Activated T-helper 2 cell treated with anti-CD3 and anti-CD28 coated beads, Interferon-gamma antibody, Interleukin-2, Interleukin-4, amounts not matched to agents 10 μg/mL and 5 μg/mL and 100 μg/mL, durations not matched to agents 14 hours and 24 hours and 36 hours (primary cell): ENCODE measurements at regions of chr6 and their contacts with region 1.

Region 1: DNA sequence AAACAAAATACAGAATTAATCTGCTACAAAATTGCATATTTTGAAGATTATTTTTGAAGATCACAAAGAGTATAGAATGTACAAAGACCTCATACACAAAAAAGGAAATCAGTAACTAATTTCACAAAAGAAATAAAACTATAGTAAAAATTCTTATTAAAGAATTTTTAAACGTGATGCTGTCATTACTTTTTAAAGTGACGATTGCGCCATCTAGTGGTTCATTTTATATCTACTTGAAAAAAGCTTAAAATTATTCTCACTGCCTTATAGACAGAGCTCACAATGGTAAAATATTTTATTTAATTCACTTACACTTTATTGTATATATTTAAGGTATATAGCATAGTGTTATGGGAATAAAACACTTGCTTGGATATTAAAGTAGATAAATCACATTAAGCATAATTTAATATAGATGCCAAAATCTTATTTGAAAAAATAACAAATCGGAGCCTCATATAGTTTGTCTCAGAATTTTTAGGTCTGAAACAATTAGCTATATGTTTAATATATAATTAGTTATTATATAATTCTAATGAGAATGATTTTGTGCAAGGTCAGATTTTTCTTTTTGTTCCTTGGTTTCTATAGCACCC is 128.8 kb downstream of the PHF3 start:
- DNase-seq: no peak
- H3K4me3 Mint-ChIP-seq: no peak overlapping the region
- H3K27ac Mint-ChIP-seq: no peak overlapping the region
- H3K4me1 Mint-ChIP-seq: no peaks in the 10 kb centered on the region
- H3K27me3 Mint-ChIP-seq: peaks cover 6% of the 10 kb centered on the region

Region 2: GRCh38 chr6:63352587-63353285 is 411.7 kb before region 1 on chr6:
- intact Hi-C with region 1: loop called (anchors 1 kb)
- DNase-seq: no peak
- H3K4me3 Mint-ChIP-seq: peak overlapping the region; percentile 47
- H3K27ac Mint-ChIP-seq: no peak overlapping the region
- H3K4me1 Mint-ChIP-seq: peaks cover 13% of the 10 kb centered on the region
- H3K27me3 Mint-ChIP-seq: peaks cover 5% of the 10 kb centered on the region

Region 3: DNA sequence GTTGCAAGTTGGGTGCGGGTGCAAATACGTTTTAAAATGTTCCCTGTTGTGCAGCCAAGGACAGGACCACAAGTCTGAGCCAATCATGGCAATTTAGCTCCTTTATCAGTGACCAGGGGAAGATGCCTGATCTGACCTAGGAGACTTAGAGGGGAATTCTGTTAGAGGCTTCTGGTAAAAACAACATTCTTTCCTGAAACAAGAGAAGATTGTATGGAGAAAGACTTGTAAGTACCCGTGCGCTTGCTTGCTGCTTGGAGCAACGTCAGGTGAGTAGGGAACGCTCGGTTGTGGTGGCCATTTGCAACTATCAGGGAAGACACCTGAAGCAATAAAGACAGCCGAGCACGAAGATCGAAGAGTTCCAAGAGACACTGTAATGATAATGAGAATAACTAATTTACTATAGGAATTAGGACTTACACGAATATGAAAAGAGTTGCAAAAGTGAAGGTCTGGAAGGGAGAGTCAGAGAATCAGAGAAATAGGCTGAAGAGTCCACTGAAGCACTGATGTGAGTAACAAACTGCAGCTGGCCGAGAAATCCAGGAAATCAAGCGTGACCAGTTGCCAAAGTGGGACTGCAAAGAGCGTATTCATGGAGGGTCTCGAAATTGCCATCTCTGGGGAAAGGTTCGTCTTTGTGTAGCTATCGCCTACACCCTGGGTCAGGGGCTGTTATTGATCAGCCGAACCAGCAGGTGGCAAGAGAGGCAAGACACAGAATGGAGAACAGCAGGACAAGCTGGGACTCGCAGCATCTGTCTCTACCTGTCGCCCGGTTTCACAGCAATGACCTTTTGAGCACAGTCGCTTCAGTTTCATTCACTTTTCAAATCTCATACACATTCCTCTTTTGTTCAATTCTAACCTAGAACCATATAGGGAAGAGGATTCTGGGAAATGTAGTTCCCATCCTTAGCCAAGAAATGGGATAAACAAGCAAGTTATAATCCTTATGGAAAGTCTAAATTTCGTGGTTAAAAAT is 166.1 kb before region 1 on chr6:
- intact Hi-C with region 1: loop called (anchors 1 kb)
- DNase-seq: peak; percentile 64
- H3K4me3 Mint-ChIP-seq: peak overlapping the region; percentile 86
- H3K27ac Mint-ChIP-seq: no peak overlapping the region
- H3K4me1 Mint-ChIP-seq: peaks cover 26% of the 10 kb centered on the region
- H3K27me3 Mint-ChIP-seq: peaks cover 8% of the 10 kb centered on the region

Region 4: DNA sequence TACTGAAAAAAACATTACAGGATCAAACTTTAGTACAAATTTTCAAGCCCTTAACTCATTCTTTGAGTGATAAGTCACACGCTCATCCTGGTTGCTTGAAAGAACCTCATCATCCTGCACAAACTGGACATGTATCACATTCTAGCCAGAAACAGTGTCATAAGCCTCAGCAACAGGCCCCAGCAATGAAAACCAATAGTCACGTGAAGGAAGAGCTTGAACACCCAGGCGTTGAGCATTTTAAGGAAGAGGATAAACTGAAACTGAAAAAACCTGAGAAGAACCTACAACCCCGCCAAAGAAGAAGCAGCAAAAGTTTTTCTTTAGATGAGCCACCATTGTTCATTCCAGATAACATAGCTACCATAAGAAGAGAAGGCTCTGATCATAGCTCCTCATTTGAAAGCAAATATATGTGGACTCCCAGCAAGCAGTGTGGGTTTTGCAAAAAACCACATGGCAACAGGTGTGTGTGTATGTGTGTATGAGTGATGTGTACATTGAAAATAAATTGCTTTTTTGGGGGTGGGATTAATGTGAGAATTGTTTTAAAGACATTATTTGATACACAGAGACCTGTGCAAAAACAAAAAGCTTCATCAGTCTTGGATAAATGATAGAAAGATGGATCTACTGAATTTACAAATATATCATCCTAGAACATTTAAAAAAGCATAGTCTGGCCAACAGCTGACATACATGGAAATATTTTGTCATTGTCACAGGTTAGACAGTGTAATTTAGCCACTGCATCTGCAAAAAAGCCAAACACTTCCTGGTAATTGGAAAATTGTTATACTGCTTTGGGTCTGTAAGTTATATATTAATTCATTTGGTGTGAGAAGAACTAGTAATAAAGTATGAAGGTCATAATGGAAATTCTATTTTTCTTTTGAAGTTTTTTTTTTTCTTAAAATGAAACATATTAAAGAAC is 78.7 kb before region 1 on chr6:
- intact Hi-C with region 1: loop called (anchors 10 kb)
- DNase-seq: no peak
- H3K4me3 Mint-ChIP-seq: no peak overlapping the region
- H3K27ac Mint-ChIP-seq: peak overlapping the region; percentile 47
- H3K4me1 Mint-ChIP-seq: peaks cover 24% of the 10 kb centered on the region
- H3K27me3 Mint-ChIP-seq: no peaks in the 10 kb centered on the region